Heart right ventricle (tissue), 16 donors: ENCODE measurements at regions of chr4 and their contacts with region 1.

Region 1: GRCh38 chr4:97150966-97151365 is 992.3 kb downstream of the STPG2 start:
- DNase-seq: no peak
- ATAC-seq: no peak
- H3K4me3 ChIP-seq: no peak overlapping the region
- H3K27ac ChIP-seq: no peak overlapping the region
- H3K4me1 ChIP-seq: no peaks in the 10 kb centered on the region
- H3K27me3 ChIP-seq: no peaks in the 10 kb centered on the region
- CTCF ChIP-seq: no peak

Region 2: GRCh38 chr4:97197106-97197505 is 46.1 kb after region 1 on chr4:
- intact Hi-C with region 1: loop called in 1 of 10 experiments (anchors 1 kb)
- DNase-seq: no peak
- ATAC-seq: no peak
- H3K4me3 ChIP-seq: no peak overlapping the region
- H3K27ac ChIP-seq: no peak overlapping the region
- H3K4me1 ChIP-seq: no peaks in the 10 kb centered on the region
- H3K27me3 ChIP-seq: no peaks in the 10 kb centered on the region
- CTCF ChIP-seq: no peak